Right cardiac atrium (tissue), 5 donors: ENCODE measurements at regions of chr2 and their contacts with region 1.

Region 1: DNA sequence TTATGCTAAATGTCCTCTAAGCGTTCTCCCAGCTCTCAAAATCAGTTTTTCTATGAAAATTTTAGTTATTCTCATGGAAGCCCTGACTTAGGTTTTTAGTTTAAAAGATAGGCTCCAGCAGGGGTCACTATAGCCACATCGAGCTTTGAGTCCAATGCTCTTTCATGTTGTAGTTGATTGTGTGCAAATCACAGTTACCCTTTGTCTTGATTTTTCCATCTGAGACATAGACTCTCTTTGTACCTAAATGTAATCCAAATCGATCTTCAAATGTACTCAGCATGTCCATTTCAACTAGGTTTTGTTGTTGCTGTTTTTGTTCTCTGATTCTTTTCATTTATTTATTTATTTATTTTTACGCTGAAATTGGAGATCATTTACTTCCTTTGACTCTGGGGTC is 26.4 kb upstream of the MSTN start:
- DNase-seq: peak in 1 of 3 donors; percentile 16
- ATAC-seq: peak; percentile 71 to 78
- H3K4me3 ChIP-seq: no peak overlapping the region
- H3K27ac ChIP-seq: no peak overlapping the region
- H3K4me1 ChIP-seq: no peaks in the 10 kb centered on the region
- H3K27me3 ChIP-seq: no peaks in the 10 kb centered on the region

Region 2: DNA sequence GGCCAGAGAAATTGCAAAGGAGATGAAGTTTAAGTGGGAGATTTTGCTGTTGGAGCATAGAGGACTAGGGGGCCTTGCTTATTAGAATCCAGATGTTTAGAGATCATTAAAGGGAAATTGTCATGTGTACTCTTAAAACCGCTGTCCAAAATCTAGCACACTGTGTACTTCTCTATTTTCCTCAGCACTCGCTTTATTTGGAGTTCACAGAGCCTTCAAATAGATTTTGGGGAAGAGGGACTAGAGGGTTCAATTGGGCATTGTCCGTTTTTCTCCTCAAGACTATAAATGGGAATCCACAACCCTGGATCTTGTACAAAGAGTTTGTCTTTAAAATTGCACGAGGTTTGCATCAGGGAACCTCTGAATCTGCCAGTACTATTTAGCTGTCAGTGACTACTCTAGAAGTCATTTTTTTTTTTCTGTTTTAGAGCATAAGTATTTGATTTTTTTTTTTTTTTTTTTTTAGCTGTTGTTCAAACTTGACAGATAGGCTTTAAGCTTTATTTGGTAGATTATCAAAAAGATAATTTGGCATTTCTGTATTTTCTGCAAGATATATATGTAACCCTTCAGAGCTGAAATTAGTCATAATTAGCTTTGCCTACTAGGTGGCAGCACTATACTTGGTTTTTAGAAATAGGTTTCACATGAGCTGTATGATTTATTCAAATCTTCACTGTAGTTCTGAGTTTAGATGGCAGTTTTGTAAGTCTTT is 290.4 kb before region 1 on chr2:
- intact Hi-C with region 1: loop called in 1 of 4 experiments (anchors 5 kb)
- DNase-seq: no peak
- ATAC-seq: peak in 1 of 2 donors; percentile 52
- H3K4me3 ChIP-seq: no peak overlapping the region
- H3K27ac ChIP-seq: no peak overlapping the region
- H3K4me1 ChIP-seq: no peaks in the 10 kb centered on the region
- H3K27me3 ChIP-seq: no peaks in the 10 kb centered on the region

Region 3: GRCh38 chr2:190180313-190181122 is 91.6 kb after region 1 on chr2:
- intact Hi-C with region 1: loop called in 1 of 4 experiments (anchors 10 kb)
- DNase-seq: peak; percentile 74 to 91 (median 88)
- ATAC-seq: peak; percentile 87 to 90
- H3K4me3 ChIP-seq: peak overlapping the region; percentile 63
- H3K27ac ChIP-seq: peak overlapping the region; percentile 86
- H3K4me1 ChIP-seq: no peaks in the 10 kb centered on the region
- H3K27me3 ChIP-seq: no peaks in the 10 kb centered on the region

Region 4: GRCh38 chr2:190270298-190270697 is 181.4 kb after region 1 on chr2:
- intact Hi-C with region 1: loop called in 3 of 4 experiments (anchors 5 to 10 kb)
- DNase-seq: no peak
- ATAC-seq: no peak
- H3K4me3 ChIP-seq: no peak overlapping the region
- H3K27ac ChIP-seq: no peak overlapping the region
- H3K4me1 ChIP-seq: no peaks in the 10 kb centered on the region
- H3K27me3 ChIP-seq: no peaks in the 10 kb centered on the region

Region 5: GRCh38 chr2:190277234-190278112 is 188.6 kb after region 1 on chr2:
- intact Hi-C with region 1: loop called (anchors 2 to 10 kb)
- DNase-seq: peak in 1 of 3 donors; percentile 40
- ATAC-seq: no peak
- H3K4me3 ChIP-seq: no peak overlapping the region
- H3K27ac ChIP-seq: no peak overlapping the region
- H3K4me1 ChIP-seq: no peaks in the 10 kb centered on the region
- H3K27me3 ChIP-seq: no peaks in the 10 kb centered on the region

Region 6: GRCh38 chr2:190301032-190301431 is 212.1 kb after region 1 on chr2:
- intact Hi-C with region 1: loop called in 1 of 4 experiments (anchors 10 kb)
- DNase-seq: peak in 1 of 3 donors; percentile 43
- ATAC-seq: peak; percentile 90 to 98
- H3K4me3 ChIP-seq: no peak overlapping the region
- H3K27ac ChIP-seq: no peak overlapping the region
- H3K4me1 ChIP-seq: no peaks in the 10 kb centered on the region
- H3K27me3 ChIP-seq: no peaks in the 10 kb centered on the region

Region 7: GRCh38 chr2:190804182-190804795 is 715.4 kb after region 1 on chr2:
- intact Hi-C with region 1: no loop called
- DNase-seq: no peak
- ATAC-seq: no peak
- H3K4me3 ChIP-seq: no peak overlapping the region
- H3K27ac ChIP-seq: no peak overlapping the region
- H3K4me1 ChIP-seq: no peaks in the 10 kb centered on the region
- H3K27me3 ChIP-seq: no peaks in the 10 kb centered on the region